ENCODE measurements at regions of chr4 and their contacts with region 1.

Region 1: GRCh38 chr4:16450724-16451123 is 224.5 kb upstream of the TAPT1 start:
- ATAC-seq: no peak
- H3K4me3 ChIP-seq: no peak overlapping the region
- H3K27ac ChIP-seq: no peak overlapping the region
- H3K4me1 ChIP-seq: peaks cover 6 to 11% of the 10 kb centered on the region in 2 donors

Region 2: GRCh38 chr4:16315456-16315855 is 135.3 kb before region 1 on chr4:
- in situ Hi-C with region 1: no loop called
- ATAC-seq: no peak
- H3K4me3 ChIP-seq: no peak overlapping the region
- H3K27ac ChIP-seq: no peak overlapping the region
- H3K4me1 ChIP-seq: no peaks in the 10 kb centered on the region

Region 3: GRCh38 chr4:16916719-16917337 is 466.1 kb after region 1 on chr4:
- in situ Hi-C with region 1: loop called in 1 of 9 experiments (anchors 25 kb)
- ATAC-seq: peak in 1 of 8 experiments; percentile 31
- H3K4me3 ChIP-seq: no peak overlapping the region
- H3K27ac ChIP-seq: no peak overlapping the region
- H3K4me1 ChIP-seq: peaks cover 0 to 5% of the 10 kb centered on the region in 2 donors

Measured in motor neuron (in vitro differentiated cells).